HEK293 (cell line): ENCODE measurements at regions of chr17 and their contacts with region 1.

Region 1: GRCh38 chr17:57243171-57243948 is 13.0 kb upstream of the MSI2 start:
- H3K4me3 ChIP-seq: no peak overlapping the region
- H3K27ac ChIP-seq: no peak overlapping the region
- H3K4me1 ChIP-seq: no peaks in the 10 kb centered on the region
- CTCF ChIP-seq: peak; percentile 91

Region 2: GRCh38 chr17:57152967-57153528 is 90.3 kb before region 1 on chr17:
- CTCF ChIA-PET with region 1: interaction called, 10 read pairs
- POLR2A ChIA-PET with region 1: no interaction called
- H3K4me3 ChIP-seq: no peak overlapping the region
- H3K27ac ChIP-seq: no peak overlapping the region
- H3K4me1 ChIP-seq: no peaks in the 10 kb centered on the region
- CTCF ChIP-seq: no peak

Region 3: GRCh38 chr17:57170866-57171265 is 72.5 kb before region 1 on chr17:
- CTCF ChIA-PET with region 1: no interaction called
- POLR2A ChIA-PET with region 1: no interaction called
- H3K4me3 ChIP-seq: no peak overlapping the region
- H3K27ac ChIP-seq: no peak overlapping the region
- H3K4me1 ChIP-seq: no peaks in the 10 kb centered on the region
- CTCF ChIP-seq: no peak

Region 4: DNA sequence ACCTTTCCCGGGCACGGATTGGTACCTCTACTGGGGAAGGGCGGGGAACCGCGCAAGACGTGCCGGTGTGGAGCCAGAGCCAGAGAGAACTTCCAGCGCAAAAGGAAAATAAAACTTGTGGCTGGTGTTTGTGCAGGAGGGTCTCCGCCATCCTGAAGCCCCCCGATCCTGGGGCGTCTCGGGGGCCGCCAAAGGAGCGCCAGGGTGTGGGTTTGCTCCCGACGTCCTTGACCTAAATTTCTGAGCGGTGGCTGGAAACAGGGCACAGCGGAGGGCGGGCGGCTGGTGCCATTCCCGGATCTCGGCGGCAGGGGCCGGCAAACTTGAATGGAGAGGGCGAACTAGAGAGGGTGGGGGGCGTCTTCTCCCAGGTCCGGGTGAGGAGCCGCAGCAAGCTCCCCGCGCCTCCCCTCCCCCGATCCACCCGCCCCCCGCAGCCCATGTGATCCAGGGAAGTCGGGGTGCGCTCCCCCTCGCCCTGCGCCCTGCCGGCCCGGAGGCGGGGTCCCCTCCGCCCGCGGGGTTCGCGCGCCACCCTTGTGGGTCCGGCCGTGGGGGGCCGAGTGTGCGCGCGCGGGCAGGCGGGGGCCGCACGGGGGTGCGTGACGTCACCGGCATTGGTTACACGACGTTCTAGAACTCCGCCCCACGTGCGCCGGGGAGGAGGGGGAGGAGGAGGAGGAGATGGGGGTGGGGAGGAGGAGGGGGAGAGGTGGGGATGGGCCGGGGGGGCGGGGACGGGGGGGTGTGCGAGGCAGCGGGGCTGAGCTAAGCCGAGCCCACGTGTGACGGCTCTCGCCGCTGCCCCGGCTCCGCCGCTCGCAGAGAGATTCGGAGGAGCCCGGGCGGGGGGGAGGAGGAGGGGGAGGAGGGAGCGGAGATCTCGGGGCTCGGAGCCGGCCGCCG is 12.7 kb after region 1 on chr17 and contains the start of gene MSI2:
- CTCF ChIA-PET with region 1: interaction called, 46 read pairs
- POLR2A ChIA-PET with region 1: interaction called, 4 read pairs
- H3K4me3 ChIP-seq: peak within 1 kb of the TSS; percentile 71
- H3K27ac ChIP-seq: peak within 1 kb of the TSS; percentile 61; the same call in 1 of the 2 replicates
- H3K4me1 ChIP-seq: peaks cover 11% of the 10 kb centered on the region; the same call in 1 of the 2 replicates
- CTCF ChIP-seq: peak; percentile 27

Region 5: DNA sequence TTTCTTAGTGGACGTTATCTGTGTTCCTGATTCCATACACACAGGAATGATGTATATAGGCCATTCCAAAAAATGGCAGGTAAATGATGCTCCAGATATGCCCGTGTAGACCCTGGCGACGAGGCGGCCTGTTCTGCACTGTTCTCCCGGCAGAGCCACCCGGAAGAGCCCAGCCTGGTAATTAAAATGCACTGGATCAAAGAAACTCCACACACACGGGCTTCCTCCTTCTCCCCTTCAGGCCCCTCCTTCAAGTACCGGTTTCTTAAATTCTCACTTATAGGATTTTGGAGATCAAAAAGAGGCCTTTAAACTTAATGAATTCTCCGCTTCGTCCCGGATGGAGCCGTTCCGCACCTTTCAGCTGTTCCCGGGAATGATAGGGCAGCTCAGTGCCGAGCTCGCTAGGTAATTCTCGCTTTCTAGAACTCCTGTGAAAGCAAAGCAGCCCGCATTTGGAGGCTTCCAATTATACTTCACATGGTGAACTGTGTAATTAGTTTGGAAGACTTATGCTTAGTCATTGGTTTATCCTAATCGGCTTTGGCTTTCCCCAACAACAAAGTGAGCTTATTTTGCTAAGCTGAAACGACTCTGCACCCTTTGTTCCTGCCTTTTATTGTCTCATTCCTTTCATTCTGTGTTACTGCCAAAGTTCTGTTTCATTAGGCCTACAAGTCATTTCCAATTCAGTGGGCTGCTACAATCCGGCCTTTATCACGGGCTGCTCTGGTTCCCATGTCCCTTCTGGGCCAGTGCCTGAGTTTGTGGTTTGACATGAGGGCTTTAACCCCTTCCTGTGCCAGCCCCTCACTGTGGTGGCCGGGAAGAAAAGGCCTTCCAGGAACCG is 163.0 kb after region 1 on chr17:
- CTCF ChIA-PET with region 1: interaction called, 31 read pairs
- POLR2A ChIA-PET with region 1: no interaction called
- H3K4me3 ChIP-seq: no peak overlapping the region
- H3K27ac ChIP-seq: peak overlapping the region; percentile 27; the same call in 1 of the 2 replicates
- H3K4me1 ChIP-seq: peaks cover 25% of the 10 kb centered on the region
- CTCF ChIP-seq: no peak

Region 6: DNA sequence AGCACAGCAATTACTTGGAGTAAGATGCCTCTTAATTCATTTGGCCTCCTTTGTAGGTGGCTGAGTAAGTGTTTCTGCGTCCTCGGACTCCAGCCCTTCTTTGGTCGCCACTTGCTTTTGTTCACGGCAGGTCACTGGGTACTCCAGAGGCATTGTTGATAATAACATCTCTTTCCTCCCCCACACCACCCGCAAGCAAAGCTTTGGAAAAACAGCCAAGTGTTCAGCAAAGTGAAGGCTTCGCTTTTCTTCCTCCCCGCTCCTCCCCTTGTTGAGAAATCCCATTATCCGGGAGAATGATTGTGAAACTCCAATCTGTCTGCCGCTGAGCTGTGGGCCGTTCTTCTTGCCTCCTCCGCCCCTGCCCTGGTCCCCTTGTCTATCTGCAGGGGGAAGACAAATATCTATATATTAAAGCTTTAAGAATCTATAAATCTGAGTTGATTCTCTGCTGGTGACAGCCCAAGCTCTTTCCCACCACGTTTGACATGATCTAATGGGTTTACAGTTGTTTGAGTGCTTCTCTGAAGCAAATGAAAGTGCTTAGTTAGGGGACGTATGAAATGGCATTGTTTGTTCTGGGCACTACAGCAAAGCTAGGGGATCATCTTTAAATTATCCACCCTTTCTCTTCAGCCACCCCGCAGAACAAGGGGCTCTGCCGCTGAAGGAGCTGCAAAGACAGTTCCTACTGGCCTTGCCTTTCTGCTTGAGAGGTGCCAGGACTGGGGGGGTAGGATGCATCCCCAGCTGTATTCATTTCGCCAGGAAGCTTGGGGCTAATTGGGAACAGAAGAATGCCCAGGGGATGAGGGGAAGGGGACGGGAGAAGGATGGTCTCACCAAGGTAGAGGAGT is 334.6 kb after region 1 on chr17:
- CTCF ChIA-PET with region 1: interaction called, 14 read pairs
- POLR2A ChIA-PET with region 1: no interaction called
- H3K4me3 ChIP-seq: peak overlapping the region; percentile 12
- H3K27ac ChIP-seq: peak overlapping the region; percentile 91
- H3K4me1 ChIP-seq: peaks cover 35% of the 10 kb centered on the region
- CTCF ChIP-seq: no peak

Region 7: DNA sequence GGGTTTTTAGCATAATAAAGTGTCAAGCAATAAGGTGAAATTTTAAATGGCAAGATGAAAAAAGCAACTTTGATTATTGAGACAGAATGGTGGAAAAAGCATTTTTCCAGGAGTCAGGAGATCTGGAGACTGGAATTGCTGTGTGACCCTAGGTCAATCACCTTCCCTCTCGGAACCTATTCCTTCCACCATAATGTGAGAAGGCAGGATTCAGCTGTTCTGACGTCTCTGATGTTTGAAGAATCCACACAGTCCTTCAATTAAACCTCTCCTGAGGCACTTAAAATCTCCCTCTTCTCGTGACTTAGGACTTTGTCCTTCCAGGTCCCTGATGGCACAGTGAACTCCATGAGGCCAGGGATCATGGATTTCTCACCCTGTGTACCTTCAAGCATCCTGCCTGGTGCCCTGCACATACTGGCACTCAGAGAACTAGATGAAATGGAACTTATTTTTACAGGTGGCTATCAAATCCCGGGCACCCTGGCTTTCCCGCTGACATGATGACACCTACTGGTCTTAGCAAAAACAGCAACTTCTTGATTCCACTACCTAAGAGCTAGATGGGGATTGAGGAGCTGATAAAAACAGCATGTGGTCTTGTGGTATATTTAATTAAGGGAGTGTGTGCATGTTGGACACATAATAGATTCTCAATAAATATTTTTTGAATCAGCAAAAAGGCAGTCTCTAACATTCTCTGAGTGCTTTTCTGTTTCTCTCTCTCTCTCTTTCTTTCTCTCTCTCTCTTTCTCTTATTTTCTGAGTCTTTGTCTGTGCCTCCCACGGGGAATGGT is 504.1 kb after region 1 on chr17:
- CTCF ChIA-PET with region 1: interaction called, 38 read pairs
- POLR2A ChIA-PET with region 1: no interaction called
- H3K4me3 ChIP-seq: no peak overlapping the region
- H3K27ac ChIP-seq: no peak overlapping the region
- H3K4me1 ChIP-seq: no peaks in the 10 kb centered on the region
- CTCF ChIP-seq: peak; percentile 55; the same call in 1 of the 2 replicates